ENCODE measurements at regions of chr2 and their contacts with region 1.

Region 1: DNA sequence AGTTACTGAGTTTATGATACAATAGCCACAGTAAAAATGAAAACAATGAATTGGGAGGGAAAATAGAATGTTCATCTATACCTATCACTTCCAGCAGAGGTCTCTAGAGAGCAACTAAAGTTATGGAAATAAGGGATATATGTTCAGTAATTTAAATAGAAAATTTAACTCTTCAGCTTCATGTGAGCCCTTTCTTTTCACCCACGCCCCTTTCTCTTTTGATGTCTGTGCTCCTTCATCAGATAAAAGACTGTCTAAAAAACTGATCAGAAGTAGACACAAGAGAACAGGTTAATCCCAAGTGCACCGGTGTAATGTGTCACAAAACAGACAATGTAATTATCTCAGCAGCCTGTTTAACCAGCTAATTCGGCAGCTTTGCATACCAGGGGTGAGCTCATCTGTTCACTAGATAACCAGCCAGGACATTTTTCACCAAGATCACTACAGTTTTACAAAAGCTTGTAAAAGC is 238.5 kb upstream of the ERBB4 start:
- DNase-seq: no peak
- ATAC-seq: no peak
- H3K4me3 ChIP-seq: no peak overlapping the region
- H3K27ac ChIP-seq: no peak overlapping the region
- H3K4me1 ChIP-seq: peaks cover 0 to 4% (median 0%) of the 10 kb centered on the region in 9 donors
- H3K27me3 ChIP-seq: no peaks in the 10 kb centered on the region
- CTCF ChIP-seq: peak; percentile 38 to 81 (median 69)

Region 2: GRCh38 chr2:212815453-212815852 is 38.4 kb after region 1 on chr2:
- intact Hi-C with region 1: no loop called
- DNase-seq: no peak
- ATAC-seq: no peak
- H3K4me3 ChIP-seq: no peak overlapping the region
- H3K27ac ChIP-seq: no peak overlapping the region
- H3K4me1 ChIP-seq: no peaks in the 10 kb centered on the region
- H3K27me3 ChIP-seq: no peaks in the 10 kb centered on the region
- CTCF ChIP-seq: no peak

Region 3: DNA sequence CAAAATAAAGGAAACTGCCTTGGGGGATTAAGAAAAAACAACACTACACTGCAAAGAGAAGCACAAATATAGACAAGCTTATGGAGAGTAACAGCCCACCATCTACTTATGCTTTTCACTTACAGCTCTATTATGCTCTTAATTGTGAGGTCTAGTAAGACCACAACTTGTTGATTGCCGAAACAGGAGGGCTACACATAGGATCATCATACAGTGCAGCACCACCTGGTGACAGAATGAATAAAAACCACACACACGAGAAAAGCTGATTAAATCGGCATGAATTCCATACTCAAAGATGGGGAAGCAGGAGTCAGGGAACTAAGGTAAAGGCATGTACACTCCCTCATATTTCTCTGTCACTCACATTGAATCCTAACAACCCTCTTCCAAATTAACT is 115.1 kb after region 1 on chr2:
- intact Hi-C with region 1: loop called in 4 of 10 experiments (anchors 2 to 10 kb)
- DNase-seq: no peak
- ATAC-seq: no peak
- H3K4me3 ChIP-seq: no peak overlapping the region
- H3K27ac ChIP-seq: no peak overlapping the region
- H3K4me1 ChIP-seq: peaks cover 0 to 6% (median 0%) of the 10 kb centered on the region in 9 donors
- H3K27me3 ChIP-seq: no peaks in the 10 kb centered on the region
- CTCF ChIP-seq: peak in 7 of 9 donors; percentile 15 to 49 (median 39)

Region 4: DNA sequence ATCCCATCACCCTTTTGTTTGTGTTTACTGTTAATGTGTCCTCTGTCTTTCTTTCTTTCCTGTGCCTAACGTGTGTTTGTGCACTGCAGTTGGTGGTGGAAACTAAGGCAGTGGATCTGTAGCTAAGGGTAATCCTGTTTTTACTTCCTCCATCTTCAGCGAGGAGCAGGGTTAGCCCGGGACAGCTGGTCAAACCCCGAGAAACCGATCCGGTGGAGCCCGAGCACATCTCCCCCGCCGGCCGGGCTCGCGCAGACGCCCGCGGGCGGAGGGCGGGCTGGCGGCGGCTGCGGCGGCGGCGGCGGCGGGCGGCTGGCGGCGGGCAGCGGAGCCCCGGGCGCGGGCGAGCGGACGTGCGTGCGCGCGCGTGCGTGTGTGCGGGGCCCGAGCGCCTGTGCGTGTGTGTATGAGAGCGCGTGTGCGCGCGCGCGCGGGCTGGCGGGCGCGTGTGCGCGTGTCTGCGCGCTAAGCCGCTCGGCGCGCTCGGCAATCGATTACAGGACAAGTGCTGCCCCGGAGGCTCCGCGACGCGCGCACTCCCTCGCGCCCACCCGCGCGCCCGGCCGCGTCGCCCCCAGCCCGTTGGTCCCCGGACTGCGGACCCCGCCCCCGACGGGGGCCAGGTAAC is 374.5 kb after region 1 on chr2 and contains the start of gene IKZF2:
- intact Hi-C with region 1: loop called (anchors 1 to 5 kb)
- DNase-seq: peak; percentile 82 to 84
- ATAC-seq: peak; percentile 85 to 98 (median 93)
- H3K4me3 ChIP-seq: peak within 1 kb of the TSS; percentile 16 to 93 (median 88)
- H3K27ac ChIP-seq: peak within 1 kb of the TSS; percentile 86 to 97 (median 92)
- H3K4me1 ChIP-seq: peaks cover 0 to 38% (median 13%) of the 10 kb centered on the region in 9 donors
- H3K27me3 ChIP-seq: peaks cover 0 to 7% (median 0%) of the 10 kb centered on the region in 7 donors
- CTCF ChIP-seq: no peak
- total RNA-seq, gene IKZF2: 2.0 to 8.1 (median 6.0) TPM

Measured in heart right ventricle (tissue), 16 donors.